GM10248 (cell line): ENCODE measurements at regions of chr9 and their contacts with region 1.

Region 1: GRCh38 chr9:893843-894420 is 52.4 kb downstream of the DMRT1 start:
- DNase-seq: peak; percentile 88
- CTCF ChIP-seq: peak; percentile 86

Region 2: DNA sequence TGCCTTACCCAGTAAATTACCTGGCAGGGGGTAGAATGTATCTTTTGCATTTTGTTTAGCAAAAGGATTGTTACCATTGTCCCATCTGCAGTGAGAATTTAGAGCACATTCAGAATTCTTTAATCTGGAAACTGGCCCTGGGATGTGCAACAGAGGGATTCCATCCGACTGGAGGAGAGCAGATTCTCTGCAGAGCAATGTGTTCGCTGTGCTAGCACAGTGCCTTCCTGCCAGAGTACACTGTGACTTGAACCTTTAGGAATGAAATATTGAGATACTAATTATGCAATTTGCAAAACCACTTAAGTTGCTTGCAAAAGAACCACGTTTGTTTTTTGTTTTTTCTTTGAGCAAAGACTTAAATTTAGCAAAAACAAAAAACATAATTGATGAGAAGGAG is 75.0 kb before region 1 on chr9:
- CTCF ChIA-PET with region 1: no interaction called
- POLR2A ChIA-PET with region 1: no interaction called
- DNase-seq: no peak
- CTCF ChIP-seq: no peak

Region 3: DNA sequence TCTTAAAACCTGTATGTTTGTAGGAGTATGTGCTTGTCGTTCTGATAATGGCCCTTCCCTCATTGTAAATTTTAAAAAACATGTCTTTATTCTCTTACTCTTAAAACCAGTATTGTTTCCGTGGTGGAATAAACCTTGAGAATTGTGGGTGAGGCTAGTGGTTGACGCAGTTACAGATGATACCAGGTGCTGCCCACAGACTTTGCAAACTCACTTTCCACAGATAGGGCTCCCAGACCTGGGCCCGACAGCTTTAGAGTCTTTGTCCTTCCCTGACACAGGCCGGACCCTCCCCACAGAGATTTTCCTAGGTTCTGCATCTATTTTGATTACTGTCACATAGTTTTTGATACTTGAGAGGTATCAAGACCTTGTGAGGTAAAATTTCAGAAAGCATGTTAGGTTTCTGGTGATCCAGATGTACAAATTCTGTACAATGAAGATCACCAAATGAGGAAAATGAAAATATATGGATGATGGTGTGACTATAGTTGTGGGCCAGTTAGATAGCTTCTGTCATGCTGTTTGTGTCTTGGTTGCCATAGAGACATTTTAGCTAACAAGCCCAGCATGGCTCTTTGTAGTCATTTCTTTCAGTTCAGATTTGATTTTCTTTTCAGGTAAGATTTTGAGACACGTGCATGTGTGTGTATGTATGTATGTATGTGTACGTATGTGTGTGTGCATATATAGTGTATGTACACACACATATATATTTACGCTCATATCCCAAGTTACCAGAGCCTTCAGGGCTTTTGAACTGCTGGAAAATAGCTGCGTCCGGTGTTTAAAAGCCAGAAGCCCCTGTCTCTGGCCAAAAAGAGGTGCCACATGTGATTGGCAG is 18.6 kb before region 1 on chr9:
- CTCF ChIA-PET with region 1: interaction called, 13 read pairs
- POLR2A ChIA-PET with region 1: no interaction called
- DNase-seq: no peak
- CTCF ChIP-seq: no peak